ENCODE measurements at regions of chr12 and their contacts with region 1.

Region 1: DNA sequence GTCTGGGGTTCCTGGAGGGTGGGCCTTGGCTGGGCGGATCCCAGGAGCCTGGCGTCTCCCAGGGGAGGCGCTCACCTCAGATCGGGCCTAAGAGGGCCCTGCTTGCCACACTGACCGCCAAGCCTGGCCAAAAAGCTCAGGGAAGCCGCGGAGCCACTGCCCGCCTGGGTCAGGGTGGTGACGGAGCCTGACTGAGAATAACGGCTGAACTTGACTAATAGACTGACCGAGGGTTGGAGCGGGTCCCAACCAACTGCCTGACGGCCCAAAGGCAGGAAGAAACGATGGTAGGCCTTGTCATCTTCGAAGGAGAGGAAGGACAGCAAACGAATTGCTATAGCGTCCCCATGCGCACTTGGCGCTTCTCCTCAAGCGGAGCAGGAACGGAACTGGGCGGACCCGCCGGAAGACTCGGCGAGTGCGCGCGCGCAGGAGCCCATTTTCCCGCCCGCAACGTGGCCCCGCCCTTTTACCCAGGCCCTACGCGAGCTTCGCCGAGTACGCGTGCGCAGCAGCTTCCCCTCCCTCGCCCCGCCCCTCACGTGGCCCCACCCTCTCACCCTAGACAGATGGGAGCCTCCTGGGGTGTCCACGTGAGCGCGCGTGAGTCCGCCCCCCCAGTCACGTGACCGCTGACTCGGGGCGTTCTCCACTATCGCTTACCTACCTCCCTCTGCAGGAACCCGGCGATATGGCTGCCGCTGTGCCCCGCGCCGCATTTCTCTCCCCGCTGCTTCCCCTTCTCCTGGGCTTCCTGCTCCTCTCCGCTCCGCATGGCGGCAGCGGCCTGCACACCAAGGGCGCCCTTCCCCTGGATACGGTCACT is at the starts of genes ERP29 and TMEM116:
- DNase-seq: peak; percentile 100
- ATAC-seq: peak; percentile 93
- total RNA-seq, gene ERP29: 55.2 TPM
- total RNA-seq, gene TMEM116: 40.0 TPM

Region 2: GRCh38 chr12:111841750-111842555 is 171.0 kb before region 1 on chr12 and contains the start of gene MAPKAPK5:
- intact Hi-C with region 1: loop called (anchors 5 kb)
- DNase-seq: peak; percentile 97
- ATAC-seq: peak; percentile 96
- total RNA-seq, gene MAPKAPK5: 26.2 TPM

Region 3: GRCh38 chr12:111942557-111942956 is 70.4 kb before region 1 on chr12:
- intact Hi-C with region 1: loop called (anchors 5 kb)
- DNase-seq: no peak
- ATAC-seq: no peak

Region 4: DNA sequence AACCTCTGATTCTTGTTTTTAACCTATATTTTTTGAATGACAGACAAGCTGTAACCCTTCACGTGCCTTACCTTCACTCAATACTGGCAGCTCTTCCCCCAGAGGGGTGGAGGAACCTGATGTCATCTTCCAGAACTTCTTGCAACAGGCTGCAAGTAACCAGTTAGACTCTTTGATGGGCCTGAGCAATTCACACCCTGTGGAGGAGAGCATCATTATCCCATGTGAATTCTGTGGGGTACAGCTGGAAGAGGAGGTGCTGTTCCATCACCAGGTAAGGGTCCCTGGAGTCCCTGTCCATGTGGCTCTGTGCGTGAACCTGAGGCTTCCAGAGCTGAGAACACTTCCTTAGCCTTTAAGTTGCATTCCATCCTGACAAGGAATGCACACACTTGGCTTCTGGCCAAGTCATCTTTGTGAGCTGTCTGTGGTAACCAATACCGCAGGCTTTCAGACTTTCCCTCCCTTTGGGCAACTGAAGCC is 135.1 kb after region 1 on chr12:
- intact Hi-C with region 1: no loop called
- DNase-seq: no peak
- ATAC-seq: no peak

Measured in Right ventricle myocardium inferior (tissue), 1 donor.